CD4-positive, alpha-beta T cell (primary cell): ENCODE measurements at regions of chr19 and their contacts with region 1.

Region 1: GRCh38 chr19:771332-771785 is 20.4 kb downstream of the MISP start:
- DNase-seq: peak in 5 of 14 experiments; percentile 13 to 69 (median 31)
- ATAC-seq: peak; percentile 56
- H3K4me3 ChIP-seq: no peak overlapping the region
- H3K4me3 Mint-ChIP-seq: no peak overlapping the region
- H3K27ac ChIP-seq: no peak overlapping the region
- H3K27ac Mint-ChIP-seq: no peak overlapping the region
- H3K4me1 ChIP-seq: no peaks in the 10 kb centered on the region
- H3K4me1 Mint-ChIP-seq: peaks cover 4% of the 10 kb centered on the region
- H3K27me3 ChIP-seq: no peaks in the 10 kb centered on the region
- H3K27me3 Mint-ChIP-seq: peaks cover 9% of the 10 kb centered on the region
- CTCF ChIP-seq: no peak

Region 2: DNA sequence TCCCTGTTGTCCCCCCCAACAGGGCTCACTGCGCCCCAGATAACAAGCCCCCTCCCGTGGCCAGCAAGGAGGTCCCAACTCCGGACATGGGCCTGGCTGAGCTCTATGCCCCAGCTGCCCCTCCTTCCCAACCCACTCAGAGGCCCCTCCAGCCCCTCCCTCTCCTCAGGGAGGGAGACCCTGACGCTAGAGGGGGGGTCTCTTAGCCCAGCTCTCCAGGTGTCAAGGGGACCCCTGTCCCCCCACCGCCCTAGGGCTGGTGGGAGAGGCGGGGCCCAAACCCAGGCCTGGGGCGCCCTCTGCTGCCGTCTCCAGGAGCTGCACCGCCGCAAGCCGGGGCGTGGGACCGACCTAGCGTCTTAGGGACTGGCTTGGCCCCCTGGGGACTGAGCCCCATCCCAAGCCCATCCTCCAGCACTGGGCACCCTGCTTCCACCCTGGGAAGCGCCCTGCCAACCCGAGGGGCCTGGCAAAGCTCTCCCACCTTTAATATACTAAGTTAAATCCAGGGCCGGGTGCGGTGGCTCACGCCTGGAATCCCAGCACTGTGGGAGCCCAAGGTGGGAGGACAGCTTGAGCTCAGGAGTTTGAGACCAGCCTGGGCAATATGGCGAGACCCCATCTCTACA is 230.3 kb after region 1 on chr19:
- CTCF ChIA-PET with region 1: no interaction called
- POLR2A ChIA-PET with region 1: no interaction called
- intact Hi-C with region 1: loop called in 1 of 2 experiments (anchors 1 kb)
- DNase-seq: peak in 13 of 14 experiments; percentile 62 to 82 (median 71)
- ATAC-seq: peak; percentile 82
- H3K4me3 ChIP-seq: no peak overlapping the region
- H3K4me3 Mint-ChIP-seq: no peak overlapping the region
- H3K27ac ChIP-seq: no peak overlapping the region
- H3K27ac Mint-ChIP-seq: no peak overlapping the region
- H3K4me1 ChIP-seq: peaks cover 23% of the 10 kb centered on the region
- H3K4me1 Mint-ChIP-seq: peaks cover 7% of the 10 kb centered on the region
- H3K27me3 ChIP-seq: peaks cover 30 to 40% of the 10 kb centered on the region in 2 experiments
- H3K27me3 Mint-ChIP-seq: peaks cover 26% of the 10 kb centered on the region
- CTCF ChIP-seq: peak; percentile 91